A549 (cell line): ENCODE measurements at regions of chr14 and their contacts with region 1.

Region 1: GRCh38 chr14:55094321-55095157 is 34.5 kb upstream of the LGALS3 start:
- DNase-seq: no peak
- ATAC-seq: peak in 1 of 2 experiments; percentile 19; a peak in 1 of 6 replicates
- H3K4me3 ChIP-seq: no peak overlapping the region
- H3K27ac ChIP-seq: peak overlapping the region in 1 of 2 experiments; percentile 43; a peak in 1 of 6 replicates
- H3K4me1 ChIP-seq: peaks cover 16% of the 10 kb centered on the region; the same call in 2 of the 3 replicates
- CTCF ChIP-seq: no peak
- EP300 ChIP-seq: no peak
- POLR2A ChIP-seq: no peak
- RAD21 ChIP-seq: no peak

Region 2: GRCh38 chr14:55123101-55123500 is 28.6 kb after region 1 on chr14:
- CTCF ChIA-PET with region 1: interaction called, 11 read pairs
- POLR2A ChIA-PET with region 1: no interaction called
- DNase-seq: no peak
- ATAC-seq: peak in 1 of 2 experiments; percentile 36; a peak in 2 of 6 replicates
- H3K4me3 ChIP-seq: no peak overlapping the region
- H3K27ac ChIP-seq: no peak overlapping the region
- H3K4me1 ChIP-seq: peaks cover 27% of the 10 kb centered on the region
- CTCF ChIP-seq: no peak
- EP300 ChIP-seq: no peak
- POLR2A ChIP-seq: no peak
- RAD21 ChIP-seq: no peak

Region 3: GRCh38 chr14:55129428-55130195 is 35.1 kb after region 1 on chr14:
- CTCF ChIA-PET with region 1: interaction called, 22 read pairs
- POLR2A ChIA-PET with region 1: interaction called, 7 read pairs
- DNase-seq: peak; percentile 72 to 82
- ATAC-seq: peak; percentile 87 to 88
- H3K4me3 ChIP-seq: peak overlapping the region; percentile 69
- H3K27ac ChIP-seq: peak overlapping the region; percentile 76 to 93
- H3K4me1 ChIP-seq: peaks cover 19% of the 10 kb centered on the region
- CTCF ChIP-seq: no peak
- EP300 ChIP-seq: no peak
- POLR2A ChIP-seq: no peak
- RAD21 ChIP-seq: no peak

Region 4: DNA sequence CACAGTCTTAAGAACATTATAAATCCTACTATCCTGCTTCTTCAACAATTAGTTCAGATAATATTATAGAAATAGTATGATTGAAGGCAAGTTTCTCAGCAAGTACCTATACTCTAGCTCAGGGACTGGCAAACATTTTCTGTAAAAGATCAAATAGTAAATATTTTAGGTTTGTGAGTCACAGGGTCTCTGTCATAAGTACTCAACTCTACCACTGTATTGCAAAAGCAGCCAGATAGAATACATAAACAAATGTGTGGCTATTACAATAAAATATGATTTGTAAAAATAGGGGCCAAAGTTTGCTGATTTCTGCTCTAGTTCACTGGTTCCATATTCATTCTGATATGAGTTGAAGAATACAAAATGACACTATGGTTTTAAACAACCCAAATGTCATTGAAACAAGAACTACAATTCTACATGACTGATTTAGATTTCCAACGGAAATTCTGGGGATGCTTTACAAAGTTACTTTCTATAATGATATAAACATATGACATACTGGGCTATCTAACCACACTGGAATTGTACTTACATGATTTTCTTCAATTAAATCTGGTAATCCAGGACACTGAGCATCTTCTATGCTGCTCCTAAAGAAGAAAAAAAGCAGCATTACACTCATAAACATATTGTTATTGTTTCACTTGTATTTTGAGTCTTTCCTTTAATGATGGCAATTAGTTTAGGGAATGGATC is 57.7 kb after region 1 on chr14:
- CTCF ChIA-PET with region 1: interaction called, 183 read pairs
- POLR2A ChIA-PET with region 1: no interaction called
- DNase-seq: no peak
- ATAC-seq: no peak
- H3K4me3 ChIP-seq: no peak overlapping the region
- H3K27ac ChIP-seq: no peak overlapping the region
- H3K4me1 ChIP-seq: no peaks in the 10 kb centered on the region
- CTCF ChIP-seq: no peak
- EP300 ChIP-seq: no peak
- POLR2A ChIP-seq: no peak
- RAD21 ChIP-seq: no peak